IMR-90 (cell line): ENCODE measurements at regions of chr7 and their contacts with region 1.

Region 1: DNA sequence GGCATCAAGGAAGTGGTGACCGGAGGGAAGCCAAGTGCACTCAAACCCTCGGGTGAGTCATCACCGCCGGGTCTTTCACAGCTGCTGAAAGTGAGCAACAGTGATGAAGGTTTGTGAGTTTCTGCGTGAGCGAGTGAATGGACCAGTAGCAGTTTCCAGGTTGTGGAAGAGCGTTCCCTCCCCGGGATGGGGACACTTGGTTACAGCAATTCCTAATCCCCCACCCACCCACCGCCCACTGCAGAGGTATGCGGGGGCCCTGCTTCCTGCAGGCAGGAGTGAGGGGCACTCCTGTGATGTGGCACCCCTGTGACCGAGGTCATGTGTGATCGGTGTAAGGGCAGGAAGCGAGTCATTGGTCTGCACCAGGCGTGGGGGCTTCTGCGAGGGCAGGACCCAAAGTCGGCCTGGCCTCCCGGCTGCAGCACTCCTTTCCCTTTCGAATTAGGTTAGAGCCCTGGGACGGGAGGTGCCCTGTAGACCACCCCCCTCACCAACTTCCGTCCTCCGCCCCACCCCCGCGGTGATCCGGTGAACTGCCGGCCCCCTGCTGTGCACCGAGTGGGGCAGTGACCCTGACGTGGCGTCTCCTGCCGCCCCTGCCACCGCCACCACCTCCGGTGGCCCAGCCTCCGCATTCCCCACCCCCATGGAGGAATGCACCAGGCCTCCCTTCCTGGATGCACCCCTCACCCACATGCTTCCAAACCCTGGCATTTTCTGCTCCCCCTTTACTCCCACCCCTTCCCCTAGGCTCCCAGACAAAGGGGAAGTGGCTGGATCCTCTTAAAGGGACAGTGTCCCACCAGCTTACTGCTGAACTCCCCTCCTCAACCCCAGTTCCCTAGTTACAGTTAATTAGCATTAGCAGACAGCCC is 10.9 kb downstream of the LIMK1 start:
- DNase-seq: peak; percentile 95
- ATAC-seq: peak; percentile 84
- H3K4me3 ChIP-seq: peak overlapping the region; percentile 21
- H3K27ac ChIP-seq: peak overlapping the region; percentile 81
- H3K4me1 ChIP-seq: peaks cover 22% of the 10 kb centered on the region
- H3K27me3 ChIP-seq: no peaks in the 10 kb centered on the region
- CTCF ChIP-seq: no peak
- POLR2A ChIP-seq: no peak; the same call in 1 of the 2 replicates
- RAD21 ChIP-seq: no peak

Region 2: DNA sequence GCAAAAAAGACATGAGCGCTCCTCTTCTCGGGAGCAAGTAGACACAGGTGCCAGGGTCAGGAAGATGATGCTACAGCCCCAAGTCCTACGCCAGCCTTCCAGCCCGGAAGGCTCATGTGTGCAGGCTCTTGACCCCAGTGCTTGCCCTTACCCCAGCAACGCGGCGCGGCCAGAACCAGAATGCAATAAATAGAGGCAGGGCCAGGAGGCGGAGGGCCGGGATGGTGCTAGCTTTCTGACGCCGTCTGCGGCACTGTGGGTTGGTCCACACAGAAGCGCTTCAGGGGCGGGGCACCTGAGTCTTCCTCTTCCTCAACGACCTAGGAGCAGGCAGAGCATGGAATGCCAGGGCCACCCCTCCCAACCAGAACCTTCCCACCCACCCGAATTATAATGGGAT is 557.4 kb before region 1 on chr7:
- CTCF ChIA-PET with region 1: no interaction called
- POLR2A ChIA-PET with region 1: no interaction called
- dilution Hi-C with region 1: no loop called
- in situ Hi-C with region 1: no loop called
- intact Hi-C with region 1: no loop called
- DNase-seq: no peak
- ATAC-seq: no peak
- H3K4me3 ChIP-seq: no peak overlapping the region
- H3K27ac ChIP-seq: no peak overlapping the region
- H3K4me1 ChIP-seq: no peaks in the 10 kb centered on the region
- H3K27me3 ChIP-seq: no peaks in the 10 kb centered on the region
- CTCF ChIP-seq: no peak
- POLR2A ChIP-seq: no peak
- RAD21 ChIP-seq: no peak

Region 3: DNA sequence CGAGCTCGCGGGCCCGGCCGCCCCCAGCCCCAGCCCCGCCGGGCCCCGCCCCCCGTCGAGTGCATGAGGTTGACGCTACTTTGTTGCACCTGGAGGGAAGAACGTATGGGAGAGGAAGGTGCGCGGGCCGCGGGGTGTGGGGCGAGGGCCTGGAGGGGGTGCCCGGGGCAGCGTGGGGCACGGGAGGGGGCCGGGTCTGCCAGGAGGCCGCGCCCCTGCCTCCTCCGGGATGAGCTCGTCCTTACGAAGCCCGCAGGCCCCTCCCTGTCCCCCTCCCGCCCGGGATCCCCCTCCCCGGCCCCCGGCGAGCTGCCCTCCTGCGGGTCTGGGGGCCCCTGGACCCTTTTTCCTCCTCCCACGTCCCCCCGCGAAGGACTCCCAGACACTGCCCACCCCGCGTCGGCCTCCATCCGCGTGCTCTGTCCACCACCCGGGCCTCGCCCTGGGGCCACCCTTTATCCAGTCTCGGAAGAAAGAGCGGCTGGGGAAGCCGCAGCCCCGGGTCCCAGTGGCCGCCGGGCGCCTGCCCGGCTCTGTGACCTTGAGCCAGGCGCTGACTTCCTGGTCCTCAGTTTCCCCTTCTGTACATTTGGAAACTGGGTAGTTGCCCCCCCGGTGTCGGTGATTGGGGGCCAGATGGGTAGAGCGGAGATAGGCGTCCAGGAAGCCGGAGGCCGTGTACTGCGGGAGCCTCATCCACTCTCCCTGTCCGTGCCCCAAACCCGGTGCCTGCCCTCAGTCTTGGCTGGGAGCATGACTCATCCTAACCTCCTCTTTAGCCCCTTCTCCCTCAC is 10.3 kb before region 1 on chr7:
- CTCF ChIA-PET with region 1: no interaction called
- POLR2A ChIA-PET with region 1: interaction called, 6 read pairs
- dilution Hi-C with region 1: no loop called
- in situ Hi-C with region 1: no loop called
- intact Hi-C with region 1: loop called (anchors 1 kb)
- DNase-seq: peak; percentile 59
- ATAC-seq: peak; percentile 57
- H3K4me3 ChIP-seq: peak overlapping the region; percentile 67
- H3K27ac ChIP-seq: peak overlapping the region; percentile 89
- H3K4me1 ChIP-seq: peaks cover 18% of the 10 kb centered on the region
- H3K27me3 ChIP-seq: no peaks in the 10 kb centered on the region
- CTCF ChIP-seq: no peak
- POLR2A ChIP-seq: peak; percentile 81
- RAD21 ChIP-seq: no peak